ENCODE measurements at regions of chr5 and their contacts with region 1.

Region 1: GRCh38 chr5:113378959-113379541 is 55.7 kb downstream of the TSSK1B start:
- DNase-seq: no peak
- H3K4me3 ChIP-seq: no peak overlapping the region
- H3K27ac ChIP-seq: no peak overlapping the region
- H3K4me1 ChIP-seq: peaks cover 0 to 13% (median 3%) of the 10 kb centered on the region in 4 donors
- H3K27me3 ChIP-seq: no peaks in the 10 kb centered on the region
- CTCF ChIP-seq: peak in 3 of 4 experiments; percentile 43 to 67 (median 67)
- EP300 ChIP-seq: no peak
- POLR2A ChIP-seq: no peak

Region 2: GRCh38 chr5:113513384-113514288 is 134.6 kb after region 1 on chr5 and contains the start of gene YTHDC2:
- intact Hi-C with region 1: loop called (anchors 2 kb)
- DNase-seq: peak; percentile 92
- H3K4me3 ChIP-seq: peak within 1 kb of the TSS; percentile 74 to 90 (median 81)
- H3K27ac ChIP-seq: peak within 1 kb of the TSS; percentile 92 to 96 (median 94)
- H3K4me1 ChIP-seq: peaks cover 0 to 23% (median 18%) of the 10 kb centered on the region in 4 donors
- H3K27me3 ChIP-seq: no peaks in the 10 kb centered on the region
- CTCF ChIP-seq: peak in 1 of 4 experiments; percentile 4
- EP300 ChIP-seq: no peak
- POLR2A ChIP-seq: peak; percentile 38 to 44
- total RNA-seq, gene YTHDC2: 15.6 to 21.9 (median 21.7) TPM

Region 3: DNA sequence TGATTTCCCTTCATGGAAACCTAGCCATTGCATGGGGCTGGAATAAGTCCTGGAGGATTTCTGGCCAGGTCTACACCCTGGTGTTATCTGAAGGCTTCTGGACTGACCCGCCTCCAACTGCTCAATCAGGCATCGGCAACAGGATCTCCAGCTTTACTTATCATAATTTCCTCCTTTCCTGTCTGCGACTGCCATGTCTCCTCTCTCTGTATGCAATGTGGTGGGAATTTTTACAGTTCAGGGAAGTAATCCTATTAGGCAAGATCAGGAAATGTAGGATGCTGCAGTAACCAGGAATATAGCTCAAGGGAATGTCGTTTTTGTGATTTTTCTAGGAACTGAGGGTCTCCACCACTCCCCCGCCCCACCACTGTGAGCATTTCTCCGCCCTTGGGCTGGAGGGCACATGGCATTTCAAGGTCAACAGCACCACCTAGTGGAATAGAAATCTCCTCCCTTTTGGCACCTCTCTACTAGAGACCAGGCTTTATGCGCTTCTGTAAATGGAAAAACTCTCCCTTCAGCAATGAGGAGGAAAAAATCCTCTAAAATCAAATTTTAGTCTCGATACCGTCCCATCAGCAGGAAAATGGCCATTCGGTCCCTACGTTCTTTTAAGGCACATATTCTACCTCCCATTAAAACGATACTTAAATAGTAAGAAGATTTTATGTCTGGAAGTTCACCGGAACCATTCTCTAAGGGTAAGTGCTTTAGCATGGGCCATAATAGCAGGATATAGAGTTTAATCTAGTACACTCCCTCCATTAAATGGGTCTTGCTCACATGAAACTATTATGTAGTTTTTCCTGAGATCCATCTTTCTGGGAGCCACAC is 227.5 kb after region 1 on chr5:
- intact Hi-C with region 1: loop called (anchors 5 kb)
- DNase-seq: no peak
- H3K4me3 ChIP-seq: no peak overlapping the region
- H3K27ac ChIP-seq: no peak overlapping the region
- H3K4me1 ChIP-seq: no peaks in the 10 kb centered on the region
- H3K27me3 ChIP-seq: no peaks in the 10 kb centered on the region
- CTCF ChIP-seq: peak in 3 of 4 experiments; percentile 52 to 59 (median 58)
- EP300 ChIP-seq: no peak
- POLR2A ChIP-seq: no peak